CD8-positive, alpha-beta memory T cell (primary cell): ENCODE measurements at regions of chr6 and their contacts with region 1.

Region 1: DNA sequence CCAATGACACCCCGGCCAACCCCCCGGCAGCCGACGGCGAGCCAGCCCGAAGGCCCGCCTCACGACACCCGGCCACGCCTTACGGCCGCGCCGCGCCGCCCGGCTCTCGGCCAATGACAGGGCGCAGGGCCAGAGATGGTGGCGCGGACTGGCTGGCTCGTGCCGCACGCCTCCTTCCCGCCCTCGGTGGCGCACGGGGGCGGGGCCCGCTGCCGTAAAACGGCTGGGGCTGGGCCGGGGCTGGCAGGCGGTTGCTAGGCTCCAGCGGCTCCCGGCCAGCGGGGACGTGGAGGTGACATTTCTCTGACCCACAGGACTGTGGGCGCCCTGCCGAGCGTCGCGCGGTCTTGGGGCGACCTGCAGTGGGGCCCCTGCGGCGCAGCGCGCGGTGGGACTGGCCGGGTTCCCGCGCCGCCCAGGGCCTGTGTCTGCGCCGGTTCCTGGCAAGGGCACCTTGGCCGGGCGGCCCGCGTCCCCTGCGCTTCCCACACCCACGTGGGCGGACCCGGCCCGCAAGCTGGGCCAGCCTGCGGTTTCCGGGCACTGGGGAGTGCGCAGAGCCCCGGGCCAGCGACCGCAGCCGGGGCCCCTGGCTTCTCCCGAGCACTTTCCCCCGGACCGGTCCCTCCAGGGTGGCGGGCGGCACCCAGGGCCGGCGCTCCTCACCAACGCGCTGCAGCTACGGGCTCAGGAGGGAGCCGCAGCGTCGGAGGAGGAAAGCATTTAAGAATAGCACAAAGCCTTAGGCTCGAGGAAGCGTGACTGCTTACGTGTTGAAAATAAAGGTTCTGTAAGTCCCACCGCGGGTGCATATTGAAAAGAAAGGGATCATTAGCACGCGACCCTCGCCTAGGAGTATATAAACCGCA is at the start of gene MPC1:
- DNase-seq: peak; percentile 91 to 96 (median 93)
- H3K4me3 ChIP-seq: peak within 1 kb of the TSS; percentile 82
- H3K4me3 Mint-ChIP-seq: peak within 1 kb of the TSS; percentile 90 to 98 (median 94)
- H3K27ac ChIP-seq: peak within 1 kb of the TSS; percentile 82
- H3K27ac Mint-ChIP-seq: peak within 1 kb of the TSS; percentile 82 to 97 (median 88)
- H3K4me1 ChIP-seq: peaks cover 6% of the 10 kb centered on the region
- H3K4me1 Mint-ChIP-seq: peaks cover 12 to 19% (median 18%) of the 10 kb centered on the region in 3 donors
- H3K27me3 ChIP-seq: no peaks in the 10 kb centered on the region
- H3K27me3 Mint-ChIP-seq: peaks cover 0 to 3% of the 10 kb centered on the region in 2 donors
- total RNA-seq, gene MPC1: 36.3 to 39.3 TPM

Region 2: GRCh38 chr6:166313255-166314070 is 69.7 kb before region 1 on chr6:
- CTCF ChIA-PET with region 1: interaction called, 24 read pairs
- POLR2A ChIA-PET with region 1: no interaction called
- DNase-seq: peak in 4 of 5 donors; percentile 20 to 65 (median 35)
- H3K4me3 ChIP-seq: no peak overlapping the region
- H3K4me3 Mint-ChIP-seq: no peak overlapping the region
- H3K27ac ChIP-seq: no peak overlapping the region
- H3K27ac Mint-ChIP-seq: no peak overlapping the region
- H3K4me1 ChIP-seq: peaks cover 3% of the 10 kb centered on the region
- H3K4me1 Mint-ChIP-seq: peaks cover 0 to 4% (median 0%) of the 10 kb centered on the region in 3 donors
- H3K27me3 ChIP-seq: peaks cover 11% of the 10 kb centered on the region
- H3K27me3 Mint-ChIP-seq: peaks cover 19% of the 10 kb centered on the region in 2 donors

Region 3: DNA sequence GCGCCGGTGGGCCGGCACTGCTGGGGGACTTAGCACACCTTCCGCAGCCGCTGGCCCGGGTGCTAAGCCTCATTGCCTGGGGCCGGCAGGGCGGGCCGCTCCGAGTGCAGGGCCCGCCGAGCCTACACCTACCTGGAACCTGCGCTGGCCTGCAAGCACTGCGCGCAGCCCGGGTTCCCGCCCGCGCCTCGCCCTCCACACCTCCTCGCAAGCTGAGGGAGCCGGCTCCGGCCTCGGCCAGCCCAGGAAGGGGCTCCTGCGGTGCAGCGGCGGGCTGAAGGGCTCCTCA is 10.3 kb after region 1 on chr6:
- CTCF ChIA-PET with region 1: interaction called, 21 read pairs
- POLR2A ChIA-PET with region 1: no interaction called
- DNase-seq: no peak
- H3K4me3 ChIP-seq: no peak overlapping the region
- H3K4me3 Mint-ChIP-seq: no peak overlapping the region
- H3K27ac ChIP-seq: no peak overlapping the region
- H3K27ac Mint-ChIP-seq: no peak overlapping the region
- H3K4me1 ChIP-seq: no peaks in the 10 kb centered on the region
- H3K4me1 Mint-ChIP-seq: peaks cover 0 to 2% (median 0%) of the 10 kb centered on the region in 3 donors
- H3K27me3 ChIP-seq: peaks cover 3% of the 10 kb centered on the region
- H3K27me3 Mint-ChIP-seq: peaks cover 14 to 23% of the 10 kb centered on the region in 2 donors

Region 4: DNA sequence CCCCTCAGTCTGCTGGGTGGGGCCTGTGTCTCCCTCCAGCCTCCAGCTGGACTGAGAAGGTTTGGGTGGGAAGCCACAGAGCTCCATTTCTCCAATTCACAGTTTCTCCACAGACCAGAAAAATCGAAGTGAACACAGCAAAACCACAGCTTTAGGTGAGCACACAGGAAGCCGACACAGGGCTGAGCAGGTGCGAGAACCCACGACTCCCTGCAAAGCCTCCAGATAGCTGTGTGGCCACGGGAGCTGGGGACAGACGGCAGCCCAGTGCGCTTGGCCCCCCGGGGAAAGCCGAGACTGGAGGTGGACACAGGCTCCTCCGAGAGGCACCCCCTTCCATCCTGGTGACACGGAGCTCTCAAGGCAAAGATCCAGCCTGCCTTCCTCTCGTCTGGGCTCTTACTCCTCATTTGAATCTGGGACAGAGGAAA is 28.6 kb after region 1 on chr6:
- CTCF ChIA-PET with region 1: interaction called, 10 read pairs
- POLR2A ChIA-PET with region 1: no interaction called
- DNase-seq: peak in 4 of 5 donors; percentile 24 to 67 (median 58)
- H3K4me3 ChIP-seq: peak overlapping the region; percentile 60
- H3K4me3 Mint-ChIP-seq: peak overlapping the region; percentile 39 to 91 (median 88)
- H3K27ac ChIP-seq: no peak overlapping the region
- H3K27ac Mint-ChIP-seq: peak overlapping the region; percentile 82 to 98 (median 93)
- H3K4me1 ChIP-seq: peaks cover 64% of the 10 kb centered on the region
- H3K4me1 Mint-ChIP-seq: peaks cover 71 to 86% (median 79%) of the 10 kb centered on the region in 3 donors
- H3K27me3 ChIP-seq: no peaks in the 10 kb centered on the region
- H3K27me3 Mint-ChIP-seq: peaks cover 0 to 4% of the 10 kb centered on the region in 2 donors

Region 5: DNA sequence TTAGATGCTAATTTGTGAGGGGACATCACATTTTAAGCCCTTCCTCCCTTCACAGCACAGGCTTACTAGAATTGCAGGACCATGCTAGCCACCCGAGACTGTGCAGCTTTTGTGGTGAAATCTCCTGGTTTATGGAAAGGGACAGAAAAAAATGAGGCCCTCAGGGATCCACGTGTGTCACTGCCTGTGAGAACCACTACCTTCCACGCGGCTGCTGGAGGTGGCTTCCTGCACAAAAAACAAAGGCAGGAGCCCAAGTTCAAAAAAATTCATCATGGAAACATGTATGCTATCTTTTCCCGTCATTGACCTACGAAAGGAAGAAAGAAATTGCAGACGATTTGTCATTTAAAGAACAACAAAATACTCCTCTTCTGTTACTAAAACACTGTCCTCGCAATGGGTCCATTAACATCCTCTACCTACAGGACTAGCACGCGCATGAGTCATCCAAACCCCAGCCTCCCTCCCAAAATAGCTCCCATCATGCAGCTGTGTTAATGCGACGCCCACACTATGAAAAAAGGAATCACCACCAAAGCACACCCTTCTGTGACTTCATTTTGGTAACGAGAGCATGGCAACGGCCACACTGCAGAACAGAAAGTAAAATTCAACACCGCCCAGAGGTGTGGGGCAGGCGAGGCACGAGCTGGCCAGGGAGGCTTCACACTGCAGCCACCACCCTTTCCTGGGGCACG is 157.6 kb after region 1 on chr6:
- CTCF ChIA-PET with region 1: no interaction called
- POLR2A ChIA-PET with region 1: no interaction called
- DNase-seq: peak in 4 of 5 donors; percentile 36 to 86 (median 58)
- H3K4me3 ChIP-seq: peak overlapping the region; percentile 49
- H3K4me3 Mint-ChIP-seq: peak overlapping the region; percentile 73 to 93 (median 82)
- H3K27ac ChIP-seq: peak overlapping the region; percentile 30
- H3K27ac Mint-ChIP-seq: peak overlapping the region; percentile 65 to 95 (median 89)
- H3K4me1 ChIP-seq: peaks cover 18% of the 10 kb centered on the region
- H3K4me1 Mint-ChIP-seq: peaks cover 23 to 37% (median 34%) of the 10 kb centered on the region in 3 donors
- H3K27me3 ChIP-seq: no peaks in the 10 kb centered on the region
- H3K27me3 Mint-ChIP-seq: no peaks in the 10 kb centered on the region

Region 6: DNA sequence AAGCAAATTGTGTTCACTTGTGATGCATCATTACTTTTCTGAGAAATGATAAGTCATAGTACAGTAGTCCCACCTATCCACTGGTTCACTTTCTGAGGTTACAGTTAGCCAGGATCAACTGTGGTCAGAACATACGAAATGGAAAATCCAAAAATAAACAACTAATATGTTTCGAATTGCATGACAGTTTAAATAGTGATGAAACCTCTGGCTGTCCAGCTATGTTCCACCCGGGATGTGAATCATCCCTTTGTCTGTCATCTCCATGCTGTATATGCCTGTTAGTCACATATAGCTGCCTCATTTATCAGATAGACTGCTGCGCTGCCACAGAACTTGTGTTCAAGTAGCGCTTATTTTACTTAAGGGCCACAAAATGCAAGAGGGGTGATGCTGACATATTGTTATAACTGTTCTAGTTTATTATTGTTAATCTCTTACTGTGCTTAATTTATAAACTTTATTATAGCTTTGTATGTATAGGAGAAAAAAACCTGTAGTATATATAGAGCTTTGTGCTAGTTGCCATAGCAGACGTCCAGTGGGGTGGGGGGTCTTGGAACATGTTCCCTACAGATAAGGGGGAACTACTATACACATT is 1472.8 kb after region 1 on chr6:
- CTCF ChIA-PET with region 1: no interaction called
- POLR2A ChIA-PET with region 1: no interaction called
- DNase-seq: no peak
- H3K4me3 ChIP-seq: no peak overlapping the region
- H3K4me3 Mint-ChIP-seq: no peak overlapping the region
- H3K27ac ChIP-seq: peak overlapping the region; percentile 65
- H3K27ac Mint-ChIP-seq: no peak overlapping the region
- H3K4me1 ChIP-seq: no peaks in the 10 kb centered on the region
- H3K4me1 Mint-ChIP-seq: peaks cover 0 to 7% (median 6%) of the 10 kb centered on the region in 3 donors
- H3K27me3 ChIP-seq: no peaks in the 10 kb centered on the region
- H3K27me3 Mint-ChIP-seq: peaks cover 2 to 10% of the 10 kb centered on the region in 2 donors